ENCODE measurements at regions of chr12 and their contacts with region 1.

Region 1: DNA sequence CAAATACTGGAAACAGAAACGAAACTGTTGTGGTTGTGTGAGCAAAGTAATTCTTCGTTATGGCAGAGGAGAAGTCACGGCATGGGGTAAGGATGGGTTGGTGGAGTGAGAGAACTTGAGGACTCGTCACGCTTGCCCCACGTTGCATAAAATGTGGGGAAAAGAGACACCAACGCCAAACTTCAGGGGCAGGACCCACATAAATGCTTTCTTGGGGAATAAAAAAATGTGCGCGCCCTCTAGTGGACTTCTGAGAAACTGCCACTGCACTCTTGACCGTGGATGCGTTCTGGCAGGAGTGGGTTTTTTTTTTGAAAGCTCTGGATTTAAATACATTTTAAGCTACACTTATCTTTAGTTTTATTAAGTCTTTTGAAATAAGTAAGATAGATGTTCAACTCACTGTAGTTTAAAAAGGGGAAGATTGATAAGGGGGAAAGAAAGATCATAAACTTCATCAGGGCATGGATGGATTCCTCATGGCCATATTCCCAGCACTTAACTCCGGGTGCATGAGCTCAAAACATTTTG is 4.1 kb upstream of the IGF1 start:
- DNase-seq: no peak
- H3K4me3 ChIP-seq: no peak overlapping the region
- CTCF ChIP-seq: peak; percentile 69

Region 2: GRCh38 chr12:101939856-101940265 is 544.6 kb before region 1 on chr12:
- CTCF ChIA-PET with region 1: interaction called, 18 read pairs
- POLR2A ChIA-PET with region 1: no interaction called
- DNase-seq: peak; percentile 41
- H3K4me3 ChIP-seq: no peak overlapping the region
- CTCF ChIP-seq: peak; percentile 75

Region 3: DNA sequence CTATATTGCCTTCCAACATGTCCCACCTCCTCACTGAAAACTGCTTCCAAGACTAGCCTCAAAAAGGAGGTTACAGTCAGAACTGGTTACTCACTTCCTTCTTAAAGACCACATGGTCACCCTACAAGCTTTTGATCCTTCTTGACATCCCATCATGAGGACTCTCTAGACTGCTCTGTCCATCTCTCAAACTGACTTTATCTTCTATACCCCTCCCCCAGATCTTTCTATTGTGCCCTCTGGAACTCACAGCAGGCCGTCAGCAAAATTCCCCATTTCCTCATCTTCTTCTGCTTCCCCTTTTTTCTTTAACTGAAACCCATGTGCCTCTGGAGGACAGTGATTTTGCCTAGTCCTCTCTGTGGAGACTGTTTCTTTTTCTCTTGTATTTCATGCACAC is 14.0 kb after region 1 on chr12:
- CTCF ChIA-PET with region 1: interaction called, 11 read pairs
- POLR2A ChIA-PET with region 1: no interaction called
- DNase-seq: no peak
- H3K4me3 ChIP-seq: no peak overlapping the region
- CTCF ChIP-seq: no peak

Region 4: DNA sequence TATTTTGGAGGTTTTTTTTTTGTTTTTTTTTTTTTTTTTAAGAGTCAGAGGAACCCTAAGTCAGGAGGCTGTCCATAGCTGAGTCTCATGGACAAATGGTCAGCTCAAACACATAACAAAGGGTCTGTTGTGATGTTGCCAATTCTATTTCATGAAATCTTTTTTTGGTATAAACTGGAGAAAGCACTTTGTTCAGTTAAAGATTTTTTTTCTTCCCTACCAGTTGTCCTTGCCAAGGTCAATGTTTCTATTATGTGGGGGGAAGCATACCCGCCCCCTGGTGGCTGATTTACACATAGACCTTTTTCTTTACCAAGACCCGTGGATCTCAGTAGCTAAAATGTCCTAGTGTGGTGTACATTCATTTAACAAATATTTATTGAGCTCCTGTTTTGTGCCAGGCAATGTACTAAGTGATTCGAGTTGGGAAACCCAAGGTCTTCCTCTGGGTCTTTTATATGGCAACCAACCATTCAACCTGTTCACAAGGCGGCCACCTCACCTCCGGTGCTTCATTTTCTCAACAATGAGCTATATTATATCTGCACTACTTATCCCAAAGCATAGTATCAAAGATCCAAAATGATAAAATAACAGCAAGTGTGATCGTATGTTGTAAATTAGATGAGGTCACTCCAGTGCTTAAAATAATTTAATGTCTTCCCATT is 218.1 kb after region 1 on chr12:
- CTCF ChIA-PET with region 1: interaction called, 21 read pairs
- POLR2A ChIA-PET with region 1: no interaction called
- DNase-seq: peak; percentile 7
- H3K4me3 ChIP-seq: no peak overlapping the region
- CTCF ChIP-seq: peak; percentile 60

Region 5: GRCh38 chr12:102769319-102769916 is 284.9 kb after region 1 on chr12:
- CTCF ChIA-PET with region 1: interaction called, 12 read pairs
- POLR2A ChIA-PET with region 1: no interaction called
- DNase-seq: peak; percentile 4
- H3K4me3 ChIP-seq: no peak overlapping the region
- CTCF ChIP-seq: peak; percentile 83

Region 6: GRCh38 chr12:103114296-103115055 is 630.0 kb after region 1 on chr12:
- CTCF ChIA-PET with region 1: no interaction called
- POLR2A ChIA-PET with region 1: no interaction called
- DNase-seq: no peak
- H3K4me3 ChIP-seq: no peak overlapping the region
- CTCF ChIP-seq: no peak

Measured in AG04449 (cell line).